A673 (cell line): ENCODE measurements at regions of chr5 and their contacts with region 1.

Region 1: DNA sequence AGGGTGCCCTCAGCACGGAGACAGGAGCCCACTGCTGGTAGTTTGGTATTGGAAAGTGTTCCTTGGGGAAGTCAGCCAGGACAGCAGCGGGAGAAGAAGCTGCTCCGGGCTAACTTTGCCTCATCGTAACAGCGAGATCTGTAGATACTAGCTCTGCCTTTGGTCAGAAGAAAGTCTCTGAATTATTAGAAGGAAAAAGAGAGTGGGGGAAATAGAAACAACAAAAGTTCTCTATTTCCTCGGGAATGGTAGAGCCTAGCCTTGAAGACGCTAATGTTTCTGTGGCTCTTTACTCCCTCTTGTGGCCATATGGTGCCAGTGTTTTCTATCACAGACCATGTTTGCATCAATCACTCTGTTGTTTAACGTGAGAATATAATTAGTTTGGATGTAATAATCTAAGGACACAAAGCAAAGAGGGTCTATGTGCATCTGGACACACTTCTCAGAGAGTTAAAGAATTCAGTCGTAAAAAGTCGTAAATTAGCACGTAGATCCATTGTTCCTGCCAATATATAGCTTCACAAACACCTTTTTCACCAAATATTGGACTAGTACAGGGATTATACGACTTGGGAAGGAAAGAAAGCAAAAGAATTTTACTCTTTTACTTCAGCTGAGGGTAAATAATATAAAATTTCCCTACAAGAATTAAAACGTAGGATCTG is 40.2 kb upstream of the HSD17B4 start:
- DNase-seq: peak; percentile 84
- H3K4me3 ChIP-seq: peak overlapping the region; percentile 48
- H3K27ac ChIP-seq: no peak overlapping the region
- H3K4me1 ChIP-seq: peaks cover 10% of the 10 kb centered on the region
- H3K27me3 ChIP-seq: no peaks in the 10 kb centered on the region
- CTCF ChIP-seq: peak; percentile 91

Region 2: GRCh38 chr5:118987988-118988865 is 423.8 kb before region 1 on chr5 and contains the start of gene DTWD2:
- CTCF ChIA-PET with region 1: interaction called, 13 read pairs
- POLR2A ChIA-PET with region 1: no interaction called
- intact Hi-C with region 1: loop called (anchors 1 kb)
- DNase-seq: peak; percentile 97
- H3K4me3 ChIP-seq: peak within 1 kb of the TSS; percentile 65
- H3K27ac ChIP-seq: peak within 1 kb of the TSS; percentile 91
- H3K4me1 ChIP-seq: peaks cover 18% of the 10 kb centered on the region
- H3K27me3 ChIP-seq: no peaks in the 10 kb centered on the region
- CTCF ChIP-seq: peak; percentile 95
- total RNA-seq, gene DTWD2: 7.9 and 12.1 TPM in 2 replicates

Region 3: DNA sequence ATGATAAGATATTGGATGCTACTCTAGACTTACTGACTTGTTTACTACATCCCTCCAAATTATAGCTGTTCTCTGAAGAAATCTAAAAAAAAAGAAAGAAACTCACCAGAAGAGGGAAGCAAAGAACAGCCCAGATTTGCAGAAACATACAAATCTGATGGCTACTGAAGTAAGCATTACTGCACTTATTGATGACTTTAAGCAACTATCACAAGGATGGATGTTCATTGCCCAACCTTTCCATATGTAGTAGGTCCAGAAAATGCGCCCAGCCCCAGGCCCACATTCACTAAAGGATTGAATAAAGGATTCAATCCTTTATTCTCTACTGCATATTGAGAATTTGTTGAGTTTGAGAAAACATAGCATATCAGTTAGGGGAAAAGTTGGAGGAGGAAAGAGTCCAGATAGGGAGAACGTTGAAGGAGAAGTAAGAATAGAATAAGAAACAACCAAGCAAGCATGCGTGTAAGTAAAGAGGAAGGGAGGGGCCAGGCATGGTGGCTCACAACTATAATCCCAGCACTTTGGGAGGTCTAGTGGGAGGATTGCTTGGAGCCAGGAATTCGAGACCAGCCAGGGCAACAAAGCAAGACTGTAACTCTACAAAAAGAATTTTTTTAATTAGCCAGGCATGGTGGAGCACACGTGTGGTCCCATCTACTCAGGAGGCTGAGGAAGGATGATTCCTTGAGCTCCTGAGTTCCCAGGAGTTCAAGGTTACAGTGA is 389.9 kb before region 1 on chr5:
- CTCF ChIA-PET with region 1: interaction called, 5 read pairs
- POLR2A ChIA-PET with region 1: no interaction called
- intact Hi-C with region 1: loop called (anchors 1 kb)
- DNase-seq: peak; percentile 58
- H3K4me3 ChIP-seq: no peak overlapping the region
- H3K27ac ChIP-seq: no peak overlapping the region
- H3K4me1 ChIP-seq: no peaks in the 10 kb centered on the region
- H3K27me3 ChIP-seq: no peaks in the 10 kb centered on the region
- CTCF ChIP-seq: peak; percentile 64

Region 4: DNA sequence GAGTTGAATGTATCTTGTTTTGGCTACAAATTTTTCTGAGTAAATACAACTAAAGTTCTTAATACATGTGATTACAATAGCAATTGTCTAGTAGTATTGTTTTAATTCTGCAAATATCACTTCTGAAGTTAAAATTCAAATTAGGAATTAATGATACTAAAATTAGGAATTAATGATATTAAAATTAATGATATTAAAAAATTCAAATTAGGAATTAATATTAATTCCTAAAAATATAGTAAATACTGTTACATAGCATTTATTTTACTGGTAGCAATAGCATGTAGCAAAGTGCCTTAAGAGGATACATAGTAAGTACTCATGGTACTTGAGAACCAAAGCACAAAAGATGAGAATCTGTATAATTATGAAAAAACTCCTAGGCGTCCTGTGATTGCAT is 205.0 kb before region 1 on chr5:
- CTCF ChIA-PET with region 1: no interaction called
- POLR2A ChIA-PET with region 1: no interaction called
- intact Hi-C with region 1: loop called (anchors 2 kb)
- DNase-seq: no peak
- H3K4me3 ChIP-seq: no peak overlapping the region
- H3K27ac ChIP-seq: no peak overlapping the region
- H3K4me1 ChIP-seq: no peaks in the 10 kb centered on the region
- H3K27me3 ChIP-seq: no peaks in the 10 kb centered on the region
- CTCF ChIP-seq: no peak

Region 5: DNA sequence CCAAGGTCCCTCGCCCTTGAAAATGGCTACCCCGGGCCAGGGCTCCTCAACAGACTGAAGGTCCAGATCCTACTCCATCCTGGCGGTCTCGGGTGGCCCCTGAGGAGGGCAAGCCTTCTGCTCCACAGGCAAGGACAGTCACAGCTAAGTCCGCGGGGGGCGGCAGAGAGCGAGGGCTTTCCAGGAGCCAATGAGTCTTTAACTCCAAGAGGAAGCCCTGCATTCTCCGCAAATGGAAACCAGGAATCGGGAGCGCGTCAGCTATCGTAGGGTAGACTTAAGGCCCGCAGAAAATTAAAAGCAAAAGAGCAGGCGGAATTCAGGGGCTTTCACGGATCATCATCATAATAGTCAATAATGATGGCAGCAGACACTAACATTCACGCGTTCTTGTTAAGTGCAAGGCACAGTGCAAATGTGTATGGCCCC is 144.1 kb before region 1 on chr5:
- CTCF ChIA-PET with region 1: no interaction called
- POLR2A ChIA-PET with region 1: no interaction called
- intact Hi-C with region 1: loop called (anchors 5 kb)
- DNase-seq: peak; percentile 97
- H3K4me3 ChIP-seq: peak overlapping the region; percentile 84
- H3K27ac ChIP-seq: peak overlapping the region; percentile 65
- H3K4me1 ChIP-seq: no peaks in the 10 kb centered on the region
- H3K27me3 ChIP-seq: no peaks in the 10 kb centered on the region
- CTCF ChIP-seq: peak; percentile 72

Region 6: GRCh38 chr5:119315516-119315949 is 96.5 kb before region 1 on chr5:
- CTCF ChIA-PET with region 1: no interaction called
- POLR2A ChIA-PET with region 1: no interaction called
- intact Hi-C with region 1: loop called (anchors 5 kb)
- DNase-seq: peak; percentile 61
- H3K4me3 ChIP-seq: no peak overlapping the region
- H3K27ac ChIP-seq: no peak overlapping the region
- H3K4me1 ChIP-seq: peaks cover 10% of the 10 kb centered on the region
- H3K27me3 ChIP-seq: no peaks in the 10 kb centered on the region
- CTCF ChIP-seq: peak; percentile 53

Region 7: DNA sequence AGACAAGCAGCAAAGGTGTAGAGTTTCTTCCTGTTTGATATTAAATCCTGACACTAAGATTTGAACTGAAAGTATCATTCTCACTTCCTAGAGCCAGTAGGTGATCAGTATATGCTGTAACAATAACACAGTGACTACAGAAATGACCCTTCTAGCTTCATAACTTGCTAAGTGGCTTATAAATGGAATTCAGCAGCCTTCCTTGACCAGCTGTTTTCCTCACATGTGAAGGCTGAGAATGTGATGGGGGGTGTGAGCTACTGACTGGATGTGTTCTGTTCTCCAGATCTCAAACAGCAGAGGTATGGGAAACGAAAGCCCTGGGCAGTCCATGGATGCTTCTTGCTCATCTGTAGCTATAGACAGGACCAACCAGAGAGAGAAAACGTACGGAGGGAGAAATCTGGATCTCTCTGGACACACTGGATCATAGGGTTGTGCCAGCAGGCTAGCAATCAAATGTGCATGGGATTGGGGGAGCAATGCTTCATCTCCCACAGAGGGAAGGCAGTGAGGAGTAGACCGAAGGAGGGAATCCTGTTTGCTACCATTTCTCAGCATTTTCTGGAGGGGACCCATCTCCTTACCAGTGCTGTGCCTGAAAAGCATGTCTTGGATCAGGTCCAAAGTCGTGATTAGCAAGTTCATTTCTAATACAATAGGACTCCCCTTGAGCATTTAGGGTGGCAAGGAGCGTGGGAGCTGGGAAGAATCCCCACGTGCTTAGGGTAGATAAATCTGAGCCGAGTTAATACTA is 16.8 kb before region 1 on chr5:
- CTCF ChIA-PET with region 1: interaction called, 5 read pairs
- POLR2A ChIA-PET with region 1: interaction called, 18 read pairs
- intact Hi-C with region 1: no loop called
- DNase-seq: no peak
- H3K4me3 ChIP-seq: no peak overlapping the region
- H3K27ac ChIP-seq: no peak overlapping the region
- H3K4me1 ChIP-seq: peaks cover 35% of the 10 kb centered on the region
- H3K27me3 ChIP-seq: no peaks in the 10 kb centered on the region
- CTCF ChIP-seq: no peak